SK-N-SH (cell line): ENCODE measurements at regions of chr19 and their contacts with region 1.

Region 1: GRCh38 chr19:10095948-10096621 is 6.4 kb downstream of the ANGPTL6 start:
- DNase-seq: peak; percentile 99
- H3K4me3 ChIP-seq: peak overlapping the region; percentile 35 to 52
- H3K27ac ChIP-seq: peak overlapping the region; percentile 48 to 70; a peak in 3 of 4 replicates
- H3K4me1 ChIP-seq: peaks cover 0 to 7% of the 10 kb centered on the region in 2 experiments; a peak in 1 of 4 replicates
- H3K27me3 ChIP-seq: no peaks in the 10 kb centered on the region
- CTCF ChIP-seq: no peak
- EP300 ChIP-seq: no peak
- RAD21 ChIP-seq: no peak

Region 2: DNA sequence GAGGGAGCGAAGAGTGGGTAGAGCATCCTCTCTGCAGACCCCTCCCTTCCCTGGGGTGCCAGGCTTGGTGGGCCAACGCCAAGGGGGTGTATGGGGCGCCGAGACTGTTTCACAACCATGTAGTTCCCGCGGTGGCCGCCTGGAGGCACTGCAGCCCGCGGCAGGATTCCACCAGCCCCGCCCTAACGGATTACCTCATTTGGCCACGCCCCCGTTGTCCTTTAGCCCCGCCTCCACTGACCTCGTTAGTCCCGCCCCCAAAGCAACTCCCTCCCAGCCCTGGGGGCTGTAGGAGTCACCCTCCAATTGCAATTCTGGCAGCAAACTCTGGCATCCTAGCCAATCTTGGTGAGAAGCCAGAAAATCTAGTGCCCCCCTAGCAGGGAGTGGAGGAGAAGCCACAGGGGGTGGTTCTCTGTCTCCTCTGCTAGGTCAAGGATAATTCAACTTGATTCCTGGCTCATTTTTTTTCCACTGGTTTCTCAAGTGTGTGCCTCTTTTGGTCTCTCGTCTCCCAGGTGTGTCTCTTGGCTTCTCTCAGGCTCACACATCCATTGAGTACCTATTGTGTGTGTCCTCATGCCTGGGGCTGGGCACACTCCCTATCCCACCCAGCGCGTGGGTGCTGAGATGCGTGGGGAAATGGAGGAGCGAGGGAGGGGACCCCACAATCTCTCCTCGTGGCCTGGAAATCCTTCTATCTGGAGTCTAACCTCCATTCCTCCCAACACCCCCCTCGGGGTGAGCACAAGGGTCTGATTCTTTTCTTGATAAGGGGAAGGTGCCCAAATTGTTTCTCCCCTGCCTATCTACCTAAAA is 161.7 kb before region 1 on chr19:
- CTCF ChIA-PET with region 1: interaction called, 17 read pairs
- POLR2A ChIA-PET with region 1: no interaction called
- DNase-seq: peak; percentile 92
- H3K4me3 ChIP-seq: peak overlapping the region in 1 of 2 experiments; percentile 30; a peak in 2 of 4 replicates
- H3K27ac ChIP-seq: no peak overlapping the region
- H3K4me1 ChIP-seq: peaks cover 5 to 17% of the 10 kb centered on the region in 2 experiments; a peak in 3 of 4 replicates
- H3K27me3 ChIP-seq: peaks cover 23% of the 10 kb centered on the region; the same call in 1 of the 2 replicates
- CTCF ChIP-seq: peak; percentile 95
- EP300 ChIP-seq: no peak
- RAD21 ChIP-seq: peak; percentile 86

Region 3: GRCh38 chr19:10106100-10106936 is 10.2 kb after region 1 on chr19 and contains the start of gene PPAN:
- CTCF ChIA-PET with region 1: interaction called, 6 read pairs
- POLR2A ChIA-PET with region 1: interaction called, 21 read pairs
- DNase-seq: peak; percentile 100
- H3K4me3 ChIP-seq: peak within 1 kb of the TSS; percentile 51 to 95
- H3K27ac ChIP-seq: peak within 1 kb of the TSS; percentile 59 to 87
- H3K4me1 ChIP-seq: peaks cover 0 to 24% of the 10 kb centered on the region in 2 experiments; a peak in 1 of 4 replicates
- H3K27me3 ChIP-seq: no peaks in the 10 kb centered on the region
- CTCF ChIP-seq: no peak
- EP300 ChIP-seq: no peak
- RAD21 ChIP-seq: no peak
- polyA plus RNA-seq, gene PPAN: 62.5 and 75.6 TPM in 2 replicates

Region 4: DNA sequence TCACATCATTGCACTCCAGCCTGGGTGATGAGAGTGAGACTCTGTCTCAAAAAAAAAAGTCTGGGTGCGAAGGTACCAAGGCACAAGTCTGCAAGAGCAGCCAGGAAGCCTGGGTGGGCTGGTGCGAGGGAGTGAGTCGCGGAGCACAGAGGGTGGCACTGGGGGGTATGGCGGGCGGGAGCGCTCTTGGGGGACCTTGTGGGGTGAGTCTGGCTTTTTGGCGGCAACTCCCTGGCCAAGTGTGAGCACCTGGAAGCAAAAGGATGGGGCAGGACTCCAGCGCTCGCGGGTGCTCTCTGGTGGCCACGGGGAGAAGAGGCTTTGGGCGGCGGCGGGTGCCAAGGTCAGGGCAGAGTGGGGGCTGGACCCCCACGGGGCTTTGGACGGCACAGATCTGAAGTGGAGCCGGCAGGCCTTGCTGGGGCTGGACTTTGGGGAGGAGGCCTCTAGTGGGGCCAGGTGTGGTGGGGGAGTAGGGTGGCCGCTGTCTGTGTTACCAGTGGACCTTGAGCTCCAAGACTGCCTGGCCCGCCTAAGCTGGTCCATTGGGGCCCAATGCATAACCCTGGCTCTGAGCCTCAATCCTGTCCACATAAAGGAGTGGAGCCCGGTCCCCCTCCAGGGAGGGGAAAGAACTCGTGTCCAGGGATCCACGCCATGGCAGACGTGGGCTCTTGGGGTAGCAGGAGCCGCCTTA is 17.0 kb after region 1 on chr19:
- CTCF ChIA-PET with region 1: interaction called, 11 read pairs
- POLR2A ChIA-PET with region 1: interaction called, 11 read pairs
- DNase-seq: peak; percentile 75
- H3K4me3 ChIP-seq: no peak overlapping the region; a peak in 1 of 4 replicates
- H3K27ac ChIP-seq: no peak overlapping the region; a peak in 1 of 4 replicates
- H3K4me1 ChIP-seq: peaks cover 0 to 5% of the 10 kb centered on the region in 2 experiments; a peak in 1 of 4 replicates
- H3K27me3 ChIP-seq: no peaks in the 10 kb centered on the region
- CTCF ChIP-seq: peak; percentile 52
- EP300 ChIP-seq: no peak
- RAD21 ChIP-seq: 0 out of 2 replicates have a peak, but pooled peaks have one; percentile 15